Activated CD4-positive, alpha-beta T cell treated with anti-CD3 and anti-CD28 coated beads for 36 hours (primary cell): ENCODE measurements at regions of chr1 and their contacts with region 1.

Region 1: GRCh38 chr1:172745014-172745413 is 86.1 kb downstream of the FASLG start:
- DNase-seq: peak; percentile 44
- ATAC-seq: peak; percentile 90
- H3K4me3 Mint-ChIP-seq: no peak overlapping the region
- H3K27ac Mint-ChIP-seq: peak overlapping the region; percentile 7
- H3K4me1 Mint-ChIP-seq: peaks cover 32% of the 10 kb centered on the region
- H3K27me3 Mint-ChIP-seq: peaks cover 10% of the 10 kb centered on the region

Region 2: GRCh38 chr1:172708452-172708851 is 36.6 kb before region 1 on chr1:
- CTCF ChIA-PET with region 1: no interaction called
- POLR2A ChIA-PET with region 1: no interaction called
- intact Hi-C with region 1: no loop called
- DNase-seq: peak; percentile 56
- ATAC-seq: peak; percentile 86
- H3K4me3 Mint-ChIP-seq: peak overlapping the region; percentile 37
- H3K27ac Mint-ChIP-seq: peak overlapping the region; percentile 47
- H3K4me1 Mint-ChIP-seq: peaks cover 13% of the 10 kb centered on the region
- H3K27me3 Mint-ChIP-seq: peaks cover 16% of the 10 kb centered on the region

Region 3: GRCh38 chr1:172727956-172728603 is 16.9 kb before region 1 on chr1:
- CTCF ChIA-PET with region 1: interaction called, 39 read pairs
- POLR2A ChIA-PET with region 1: no interaction called
- intact Hi-C with region 1: no loop called
- DNase-seq: peak; percentile 71
- ATAC-seq: peak; percentile 96
- H3K4me3 Mint-ChIP-seq: no peak overlapping the region
- H3K27ac Mint-ChIP-seq: no peak overlapping the region
- H3K4me1 Mint-ChIP-seq: peaks cover 18% of the 10 kb centered on the region
- H3K27me3 Mint-ChIP-seq: no peaks in the 10 kb centered on the region

Region 4: DNA sequence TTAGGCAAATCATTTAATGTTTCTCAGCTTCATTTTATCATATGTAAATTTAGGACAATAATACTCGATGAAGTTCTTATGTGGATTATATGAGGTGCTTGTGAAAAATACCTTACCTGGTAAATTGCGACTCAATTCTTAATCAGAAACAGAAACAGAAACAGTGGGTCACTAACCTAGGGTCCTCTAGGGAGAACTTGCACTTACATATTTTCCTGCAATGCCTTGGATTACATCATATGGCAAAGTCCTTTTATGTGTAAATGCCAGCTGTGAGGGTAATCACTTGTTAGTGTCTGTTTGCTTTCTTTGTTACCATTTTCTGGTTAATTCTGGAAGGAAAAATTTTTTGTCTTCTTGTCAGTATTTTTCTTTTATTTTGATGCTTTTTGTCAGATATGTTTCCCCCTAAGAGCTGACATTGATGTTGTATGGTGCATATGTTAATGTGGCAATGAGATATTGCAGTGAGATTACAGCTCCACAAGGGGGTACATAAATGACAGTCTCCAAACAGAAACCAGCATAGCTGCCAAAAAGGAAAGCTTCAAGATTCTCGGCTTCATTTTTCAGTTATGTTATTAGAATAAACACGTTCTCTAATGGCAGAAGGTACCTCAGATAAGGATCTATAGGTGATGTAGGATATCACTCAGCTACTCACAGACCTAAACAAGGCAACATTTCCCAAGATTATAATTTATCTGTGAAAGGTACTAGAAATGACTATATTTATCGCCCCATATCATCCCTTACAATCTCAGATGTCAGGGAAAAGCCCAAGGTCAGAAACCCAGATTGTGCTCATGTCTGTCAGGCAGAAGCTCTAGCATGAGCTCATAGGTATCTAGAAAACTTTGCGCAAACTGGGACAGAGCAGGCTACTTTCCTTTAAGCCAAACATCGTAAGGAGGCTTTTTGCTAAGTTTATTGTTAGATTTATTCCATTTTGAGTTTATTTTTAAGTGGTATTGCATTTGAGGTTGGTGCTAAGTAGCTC is 33.7 kb after region 1 on chr1:
- CTCF ChIA-PET with region 1: interaction called, 37 read pairs
- POLR2A ChIA-PET with region 1: interaction called, 6 read pairs
- intact Hi-C with region 1: loop called in 1 of 2 experiments (anchors 1 kb)
- DNase-seq: no peak
- ATAC-seq: peak; percentile 86
- H3K4me3 Mint-ChIP-seq: no peak overlapping the region
- H3K27ac Mint-ChIP-seq: peak overlapping the region; percentile 33
- H3K4me1 Mint-ChIP-seq: peaks cover 17% of the 10 kb centered on the region
- H3K27me3 Mint-ChIP-seq: peaks cover 5% of the 10 kb centered on the region

Region 5: GRCh38 chr1:172895050-172895460 is 150.0 kb after region 1 on chr1:
- CTCF ChIA-PET with region 1: interaction called, 32 read pairs
- POLR2A ChIA-PET with region 1: interaction called, 4 read pairs
- intact Hi-C with region 1: loop called (anchors 2 to 5 kb)
- DNase-seq: peak; percentile 35
- ATAC-seq: peak; percentile 84
- H3K4me3 Mint-ChIP-seq: peak overlapping the region; percentile 20
- H3K27ac Mint-ChIP-seq: peak overlapping the region; percentile 32
- H3K4me1 Mint-ChIP-seq: peaks cover 42% of the 10 kb centered on the region
- H3K27me3 Mint-ChIP-seq: peaks cover 29% of the 10 kb centered on the region

Region 6: DNA sequence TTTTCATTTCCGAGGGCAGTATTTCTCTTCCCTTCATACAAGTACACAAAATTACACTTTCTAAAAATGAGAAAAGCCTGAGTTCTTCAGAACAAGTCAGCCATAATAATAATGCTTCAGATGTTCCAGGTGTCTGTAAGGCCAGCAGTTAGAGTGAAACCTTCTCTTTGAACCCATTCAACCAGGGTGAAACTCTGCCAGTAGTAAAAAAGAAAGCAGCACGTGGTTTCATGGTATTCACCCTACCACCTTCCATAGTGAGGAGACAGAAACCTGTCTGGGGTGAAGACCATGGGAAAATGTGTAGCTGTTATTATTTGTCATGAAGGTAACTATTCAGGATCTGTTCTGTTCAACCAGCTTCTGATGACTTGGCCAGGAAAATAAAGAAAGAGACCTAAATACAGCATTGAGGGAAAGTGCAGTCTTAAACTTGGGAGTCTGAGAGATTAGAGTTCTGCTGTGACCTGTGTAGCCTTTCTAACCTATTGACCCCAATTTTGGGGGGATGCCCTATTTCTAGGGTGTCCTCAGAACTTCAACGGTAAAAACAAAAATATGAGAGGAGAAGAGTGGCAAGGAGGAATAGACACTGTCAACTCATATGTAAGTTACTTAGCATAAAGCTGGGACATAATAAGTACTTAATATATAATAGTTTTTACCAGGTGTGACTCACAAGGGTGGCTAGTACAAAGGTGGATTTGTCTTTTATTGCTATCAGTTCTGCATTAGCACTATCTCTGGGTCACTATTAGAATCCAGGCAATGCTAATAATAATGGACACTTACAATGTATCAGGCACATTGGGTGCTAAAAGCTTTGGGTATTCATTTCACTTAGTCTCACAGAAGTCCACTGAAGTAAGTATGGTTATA is 532.1 kb after region 1 on chr1:
- CTCF ChIA-PET with region 1: interaction called, 4 read pairs
- POLR2A ChIA-PET with region 1: no interaction called
- intact Hi-C with region 1: loop called in 1 of 2 experiments (anchors 5 kb)
- DNase-seq: peak; percentile 11
- ATAC-seq: peak; percentile 96
- H3K4me3 Mint-ChIP-seq: no peak overlapping the region
- H3K27ac Mint-ChIP-seq: no peak overlapping the region
- H3K4me1 Mint-ChIP-seq: peaks cover 9% of the 10 kb centered on the region
- H3K27me3 Mint-ChIP-seq: no peaks in the 10 kb centered on the region

Region 7: GRCh38 chr1:173420330-173420806 is 675.4 kb after region 1 on chr1:
- CTCF ChIA-PET with region 1: interaction called, 4 read pairs
- POLR2A ChIA-PET with region 1: no interaction called
- intact Hi-C with region 1: loop called (anchors 1 to 2 kb)
- DNase-seq: peak; percentile 69
- ATAC-seq: peak; percentile 91
- H3K4me3 Mint-ChIP-seq: no peak overlapping the region
- H3K27ac Mint-ChIP-seq: no peak overlapping the region
- H3K4me1 Mint-ChIP-seq: peaks cover 3% of the 10 kb centered on the region
- H3K27me3 Mint-ChIP-seq: no peaks in the 10 kb centered on the region